Common myeloid progenitor, CD34-positive (primary cell): ENCODE measurements at regions of chr1 and their contacts with region 1.

Region 1: DNA sequence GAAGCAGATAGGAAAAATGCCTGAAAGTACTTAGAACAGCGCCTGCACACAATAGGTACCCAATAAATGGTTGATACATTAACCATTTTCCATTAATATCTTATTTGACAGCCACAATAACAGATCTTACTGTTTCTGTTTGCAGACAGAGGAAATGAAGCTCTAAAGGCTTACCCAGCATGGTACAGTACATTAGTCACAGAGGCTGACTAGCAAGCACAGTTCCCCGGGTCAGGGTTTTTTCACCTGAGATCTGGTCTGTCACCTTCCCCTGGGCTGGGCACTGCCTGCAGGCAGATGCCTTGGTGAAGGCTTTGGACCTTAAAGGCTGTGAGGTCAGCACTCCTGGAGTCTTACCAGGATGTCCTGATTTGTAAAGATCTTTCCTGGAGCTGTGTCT is 2.8 kb downstream of the TRIM63 start:
- DNase-seq: no peak
- H3K4me3 ChIP-seq: no peak overlapping the region
- H3K27ac ChIP-seq: no peak overlapping the region
- H3K4me1 ChIP-seq: no peaks in the 10 kb centered on the region
- H3K27me3 ChIP-seq: peaks cover 0 to 11% (median 3%) of the 10 kb centered on the region in 5 experiments

Region 2: GRCh38 chr1:26053718-26054560 is 10.7 kb before region 1 on chr1:
- CTCF ChIA-PET with region 1: interaction called, 10 read pairs
- POLR2A ChIA-PET with region 1: interaction called, 4 read pairs
- DNase-seq: no peak
- H3K4me3 ChIP-seq: no peak overlapping the region
- H3K27ac ChIP-seq: no peak overlapping the region
- H3K4me1 ChIP-seq: peaks cover 0 to 11% (median 4%) of the 10 kb centered on the region in 4 experiments
- H3K27me3 ChIP-seq: peaks cover 2 to 28% (median 16%) of the 10 kb centered on the region in 5 experiments

Region 3: DNA sequence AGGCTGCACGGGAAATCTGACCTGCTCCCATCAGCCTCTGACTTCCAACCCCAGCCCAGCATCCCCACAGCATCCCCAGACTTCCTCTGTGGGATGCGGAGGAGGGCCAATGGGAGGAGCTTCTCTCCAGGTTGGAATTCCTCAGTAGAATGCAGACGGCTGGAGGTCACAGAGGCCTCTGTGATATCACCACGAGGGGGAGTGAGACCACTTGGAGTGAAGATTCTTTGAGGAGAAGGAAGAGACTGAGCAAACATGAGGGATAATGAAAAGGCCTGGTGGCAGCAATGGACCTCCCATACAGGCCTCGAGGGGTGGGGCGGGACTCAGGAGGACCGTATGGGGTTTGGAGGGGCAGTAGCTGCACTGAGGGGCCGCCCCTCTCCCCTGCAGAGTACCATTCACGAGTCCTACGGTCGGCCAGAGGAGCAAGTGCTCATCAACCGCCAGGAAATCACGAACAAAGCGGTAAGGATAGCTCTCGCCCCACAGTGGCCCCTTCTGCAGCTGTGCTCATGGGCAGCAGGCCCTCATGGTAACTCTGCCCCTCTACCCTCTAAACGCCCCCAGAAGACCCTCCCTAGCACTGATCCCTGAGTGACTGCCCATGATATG is 125.9 kb after region 1 on chr1 and contains the start of gene CATSPER4:
- CTCF ChIA-PET with region 1: no interaction called
- POLR2A ChIA-PET with region 1: no interaction called
- DNase-seq: peak; percentile 29 to 54 (median 49)
- H3K4me3 ChIP-seq: no peak within 1 kb of the TSS
- H3K27ac ChIP-seq: no peak within 1 kb of the TSS
- H3K4me1 ChIP-seq: no peaks in the 10 kb centered on the region
- H3K27me3 ChIP-seq: no peaks in the 10 kb centered on the region